ENCODE measurements at regions of chr1 and their contacts with region 1.

Region 1: DNA sequence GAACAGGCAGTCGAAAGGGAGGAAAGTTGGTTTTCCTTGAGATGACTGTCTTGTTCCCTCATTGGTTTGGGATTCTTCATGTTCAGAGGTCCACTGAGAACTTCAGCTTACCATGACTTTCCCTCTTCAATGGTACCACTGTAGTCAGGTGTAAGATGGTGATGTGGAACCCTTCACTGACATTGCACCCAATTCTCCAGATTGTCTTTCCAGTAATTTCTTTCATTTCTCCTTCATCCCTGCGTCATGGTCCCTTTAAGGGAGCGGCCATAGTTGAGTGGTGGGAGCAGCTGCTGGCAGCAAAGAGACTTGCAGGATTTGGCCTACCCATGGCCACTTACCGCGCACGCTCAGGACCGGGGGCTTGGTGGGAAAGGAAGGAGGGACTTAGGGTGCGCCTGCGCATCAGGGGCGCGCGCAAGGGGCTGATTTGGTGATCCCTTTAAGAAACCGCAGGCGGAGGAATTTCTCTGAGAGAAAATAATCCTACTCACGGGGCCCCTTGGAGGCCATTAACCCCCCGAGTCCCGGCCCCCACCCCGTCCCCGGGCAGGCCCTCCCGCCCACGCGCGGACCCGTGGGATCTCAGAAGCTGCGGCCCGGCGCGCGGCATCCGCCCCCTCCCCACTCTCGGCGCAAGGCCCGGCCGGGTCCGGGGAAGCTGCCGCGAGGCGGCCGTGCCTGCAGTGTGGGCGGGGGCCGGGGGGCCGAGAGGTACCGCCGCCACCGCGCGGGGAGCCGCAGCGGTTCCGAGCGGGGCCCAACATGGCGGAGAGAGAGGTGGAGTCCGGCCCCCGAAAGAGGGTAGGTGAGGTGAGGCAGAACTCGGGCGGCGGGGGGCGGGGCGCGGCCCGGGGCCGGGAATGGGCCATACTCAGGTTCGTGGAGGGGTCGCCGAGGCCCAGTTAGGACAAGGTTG is at the start of gene ZMYM4:
- DNase-seq: peak; percentile 85
- ATAC-seq: peak; percentile 92
- H3K4me3 Mint-ChIP-seq: peak within 1 kb of the TSS; percentile 86
- H3K27ac Mint-ChIP-seq: peak within 1 kb of the TSS; percentile 82
- H3K4me1 Mint-ChIP-seq: peaks cover 28% of the 10 kb centered on the region
- H3K27me3 Mint-ChIP-seq: peaks cover 11% of the 10 kb centered on the region
- CTCF ChIP-seq: no peak
- total RNA-seq, gene ZMYM4: 42.4 and 46.4 TPM in 2 replicates

Region 2: GRCh38 chr1:34865981-34866761 is 402.4 kb before region 1 on chr1:
- CTCF ChIA-PET with region 1: no interaction called
- POLR2A ChIA-PET with region 1: interaction called, 3 read pairs
- intact Hi-C with region 1: loop called (anchors 1 kb)
- DNase-seq: peak; percentile 95
- ATAC-seq: peak; percentile 80
- H3K4me3 Mint-ChIP-seq: peak overlapping the region; percentile 90
- H3K27ac Mint-ChIP-seq: peak overlapping the region; percentile 88
- H3K4me1 Mint-ChIP-seq: peaks cover 17% of the 10 kb centered on the region
- H3K27me3 Mint-ChIP-seq: no peaks in the 10 kb centered on the region
- CTCF ChIP-seq: peak; percentile 93

Region 3: DNA sequence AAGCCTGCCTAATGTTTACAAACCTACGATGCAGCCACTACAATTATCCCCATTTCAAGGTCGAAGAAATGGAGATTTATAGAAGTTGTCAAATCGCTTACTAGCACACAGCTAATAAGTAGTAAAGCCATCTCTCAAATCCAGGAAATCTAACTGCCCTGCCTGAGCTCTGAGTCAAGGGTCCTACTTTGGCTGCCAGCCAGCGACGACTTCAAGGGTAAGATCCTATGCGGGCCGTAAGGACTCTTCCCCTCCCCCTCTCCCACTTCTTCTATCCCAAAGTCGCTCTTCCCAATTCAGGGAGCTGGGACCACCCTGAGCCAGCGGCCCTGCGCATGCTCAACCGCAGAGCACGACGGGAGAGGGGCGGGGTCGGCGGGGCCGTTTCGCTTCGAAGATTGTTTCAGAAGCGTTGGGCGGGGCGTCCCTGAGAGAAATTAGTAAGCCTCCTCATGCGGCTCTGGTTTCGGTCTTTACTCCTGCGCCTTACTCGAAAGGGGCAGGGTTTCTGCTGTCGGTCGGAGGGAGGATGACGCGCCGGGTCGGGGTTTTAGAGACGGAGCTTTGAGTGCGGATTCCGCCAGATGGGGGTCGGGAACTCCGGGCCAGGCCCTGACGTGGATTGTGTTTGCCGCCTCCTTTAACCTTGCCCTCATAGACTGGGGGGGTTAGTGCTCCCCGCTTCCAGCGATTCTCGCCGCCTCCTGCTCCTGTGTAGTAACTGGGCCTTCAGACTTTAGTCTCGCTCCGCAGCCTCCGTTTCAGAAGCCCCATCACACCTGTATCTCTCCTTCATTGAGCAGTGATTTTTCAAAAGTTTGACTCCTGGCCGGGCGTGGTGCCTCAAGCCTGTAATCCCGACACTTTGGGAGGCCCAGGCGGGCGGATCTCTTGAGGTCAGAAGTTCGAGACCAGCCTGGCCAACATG is 189.3 kb before region 1 on chr1 and contains the start of gene ZMYM1:
- CTCF ChIA-PET with region 1: no interaction called
- POLR2A ChIA-PET with region 1: interaction called, 7 read pairs
- intact Hi-C with region 1: loop called (anchors 1 kb)
- DNase-seq: peak; percentile 88
- ATAC-seq: peak; percentile 96
- H3K4me3 Mint-ChIP-seq: peak within 1 kb of the TSS; percentile 95
- H3K27ac Mint-ChIP-seq: peak within 1 kb of the TSS; percentile 98
- H3K4me1 Mint-ChIP-seq: peaks cover 21% of the 10 kb centered on the region
- H3K27me3 Mint-ChIP-seq: peaks cover 4% of the 10 kb centered on the region
- CTCF ChIP-seq: no peak
- total RNA-seq, gene ZMYM1: 7.4 and 9.0 TPM in 2 replicates

Region 4: GRCh38 chr1:35202048-35202719 is 66.4 kb before region 1 on chr1:
- CTCF ChIA-PET with region 1: no interaction called
- POLR2A ChIA-PET with region 1: no interaction called
- intact Hi-C with region 1: loop called (anchors 2 kb)
- DNase-seq: peak; percentile 30
- ATAC-seq: peak; percentile 100
- H3K4me3 Mint-ChIP-seq: no peak overlapping the region
- H3K27ac Mint-ChIP-seq: no peak overlapping the region
- H3K4me1 Mint-ChIP-seq: peaks cover 5% of the 10 kb centered on the region
- H3K27me3 Mint-ChIP-seq: no peaks in the 10 kb centered on the region
- CTCF ChIP-seq: peak; percentile 58

Region 5: DNA sequence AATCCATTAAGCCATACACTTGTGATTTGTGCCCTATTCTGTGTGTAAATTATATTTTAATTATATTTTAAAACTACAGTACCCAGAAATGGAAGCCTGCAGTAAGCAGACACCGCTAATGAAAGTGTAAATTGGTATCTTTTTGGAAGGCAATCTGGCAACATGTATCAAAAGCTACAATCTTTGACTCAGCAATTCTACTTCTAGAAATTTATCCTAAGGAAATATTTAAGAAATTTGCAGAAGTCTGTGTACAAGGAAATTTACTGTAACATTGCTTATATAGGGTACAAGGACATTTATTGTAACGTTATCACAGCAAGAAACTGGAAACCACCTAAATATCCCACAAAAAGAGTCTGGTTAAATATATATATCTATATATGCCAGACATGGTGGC is 14.6 kb before region 1 on chr1:
- CTCF ChIA-PET with region 1: no interaction called
- POLR2A ChIA-PET with region 1: no interaction called
- intact Hi-C with region 1: no loop called
- DNase-seq: no peak
- ATAC-seq: no peak
- H3K4me3 Mint-ChIP-seq: no peak overlapping the region
- H3K27ac Mint-ChIP-seq: no peak overlapping the region
- H3K4me1 Mint-ChIP-seq: no peaks in the 10 kb centered on the region
- H3K27me3 Mint-ChIP-seq: peaks cover 11% of the 10 kb centered on the region
- CTCF ChIP-seq: no peak

Region 6: GRCh38 chr1:35390600-35391494 is 122.3 kb after region 1 on chr1:
- CTCF ChIA-PET with region 1: no interaction called
- POLR2A ChIA-PET with region 1: no interaction called
- intact Hi-C with region 1: no loop called
- DNase-seq: no peak
- ATAC-seq: no peak
- H3K4me3 Mint-ChIP-seq: no peak overlapping the region
- H3K27ac Mint-ChIP-seq: no peak overlapping the region
- H3K4me1 Mint-ChIP-seq: no peaks in the 10 kb centered on the region
- H3K27me3 Mint-ChIP-seq: no peaks in the 10 kb centered on the region
- CTCF ChIP-seq: no peak

Region 7: DNA sequence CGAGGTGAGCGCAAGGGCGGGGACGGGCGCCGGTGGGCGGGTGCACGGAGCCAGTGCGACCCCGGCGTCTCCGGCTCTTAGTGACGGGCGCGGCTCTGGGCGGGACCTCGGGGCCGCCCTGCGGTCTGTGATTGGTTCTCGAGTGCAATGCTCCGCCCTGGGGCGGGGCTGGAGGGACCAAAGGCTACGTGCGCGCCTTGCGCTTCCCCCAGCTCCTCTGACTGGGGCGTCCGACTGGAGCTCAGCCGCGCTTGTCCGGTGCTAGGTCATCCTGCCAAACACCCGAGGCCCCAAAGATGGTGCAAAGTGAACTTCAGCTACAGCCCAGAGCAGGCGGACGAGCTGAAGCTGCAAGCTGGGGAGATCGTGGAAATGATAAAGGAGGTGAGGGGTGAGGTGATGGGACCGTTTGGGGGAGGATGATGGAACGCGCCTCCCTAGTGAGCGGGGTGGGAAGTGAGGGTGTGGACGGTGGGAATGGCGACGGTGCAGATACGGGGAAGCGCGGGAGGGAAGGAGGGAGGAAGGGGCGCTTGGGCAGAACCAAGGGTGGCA is 1038.4 kb after region 1 on chr1:
- CTCF ChIA-PET with region 1: no interaction called
- POLR2A ChIA-PET with region 1: no interaction called
- intact Hi-C with region 1: loop called (anchors 2 kb)
- DNase-seq: peak; percentile 94
- ATAC-seq: peak; percentile 98
- H3K4me3 Mint-ChIP-seq: peak overlapping the region; percentile 97
- H3K27ac Mint-ChIP-seq: peak overlapping the region; percentile 88
- H3K4me1 Mint-ChIP-seq: peaks cover 40% of the 10 kb centered on the region
- H3K27me3 Mint-ChIP-seq: no peaks in the 10 kb centered on the region
- CTCF ChIP-seq: no peak

Measured in activated B cell treated with CpG ODN at 0.5 μM for 24 hours (primary cell).